Activated CD4-positive, alpha-beta T cell treated with anti-CD3 and anti-CD28 coated beads for 36 hours (primary cell): ENCODE measurements at regions of chr5 and their contacts with region 1.

Region 1: DNA sequence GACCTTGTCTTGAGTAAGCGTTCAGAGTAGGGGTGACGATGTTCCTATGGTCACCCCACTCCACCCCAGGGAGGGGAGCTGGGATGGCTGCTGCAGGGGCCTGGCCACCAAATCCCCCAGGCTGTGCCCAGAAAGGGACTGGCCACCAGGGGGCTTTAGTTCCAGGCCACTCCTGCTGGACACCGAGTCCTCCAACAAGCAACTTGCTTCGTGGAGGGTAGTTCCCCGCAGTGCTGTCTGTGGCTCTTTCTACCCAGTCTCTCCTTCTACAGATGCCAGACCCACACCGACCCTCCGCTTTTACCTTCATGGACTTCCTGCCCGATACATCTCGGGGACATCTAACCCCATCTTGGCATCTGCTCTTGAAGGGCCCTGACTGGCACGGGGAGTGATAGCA is 35.7 kb upstream of the GABRP start:
- DNase-seq: no peak
- ATAC-seq: no peak
- H3K4me3 Mint-ChIP-seq: no peak overlapping the region
- H3K27ac Mint-ChIP-seq: no peak overlapping the region
- H3K4me1 Mint-ChIP-seq: peaks cover 2% of the 10 kb centered on the region
- H3K27me3 Mint-ChIP-seq: peaks cover 38% of the 10 kb centered on the region

Region 2: GRCh38 chr5:170273945-170274710 is 473.7 kb before region 1 on chr5:
- CTCF ChIA-PET with region 1: no interaction called
- POLR2A ChIA-PET with region 1: no interaction called
- intact Hi-C with region 1: no loop called
- DNase-seq: peak; percentile 81
- ATAC-seq: peak; percentile 16
- H3K4me3 Mint-ChIP-seq: peak overlapping the region; percentile 45
- H3K27ac Mint-ChIP-seq: peak overlapping the region; percentile 92
- H3K4me1 Mint-ChIP-seq: peaks cover 92% of the 10 kb centered on the region
- H3K27me3 Mint-ChIP-seq: no peaks in the 10 kb centered on the region

Region 3: GRCh38 chr5:170614720-170615119 is 133.1 kb before region 1 on chr5:
- CTCF ChIA-PET with region 1: no interaction called
- POLR2A ChIA-PET with region 1: no interaction called
- intact Hi-C with region 1: no loop called
- DNase-seq: peak; percentile 44
- ATAC-seq: peak; percentile 58
- H3K4me3 Mint-ChIP-seq: no peak overlapping the region
- H3K27ac Mint-ChIP-seq: no peak overlapping the region
- H3K4me1 Mint-ChIP-seq: peaks cover 2% of the 10 kb centered on the region
- H3K27me3 Mint-ChIP-seq: peaks cover 2% of the 10 kb centered on the region

Region 4: DNA sequence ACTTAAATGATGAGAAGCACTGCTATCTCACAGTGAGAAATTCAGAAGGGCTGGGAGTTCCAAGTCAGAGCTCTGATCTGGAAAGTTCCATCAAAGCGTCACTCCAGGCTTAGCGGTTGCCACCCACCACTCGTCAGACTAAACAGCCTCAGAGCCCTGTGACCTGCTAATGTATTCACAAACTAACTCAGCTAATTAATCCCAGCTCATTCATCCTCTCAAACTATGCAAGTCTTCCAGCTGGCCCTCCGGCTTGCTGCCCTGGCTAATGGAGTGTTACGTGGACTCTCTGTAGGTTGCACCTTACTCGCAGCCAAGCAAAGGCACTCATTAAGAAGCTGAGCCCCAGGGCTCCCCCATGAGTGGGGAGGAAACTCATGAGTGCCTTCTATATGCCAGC is 46.5 kb before region 1 on chr5:
- CTCF ChIA-PET with region 1: no interaction called
- POLR2A ChIA-PET with region 1: no interaction called
- intact Hi-C with region 1: no loop called
- DNase-seq: no peak
- ATAC-seq: no peak
- H3K4me3 Mint-ChIP-seq: no peak overlapping the region
- H3K27ac Mint-ChIP-seq: no peak overlapping the region
- H3K4me1 Mint-ChIP-seq: no peaks in the 10 kb centered on the region
- H3K27me3 Mint-ChIP-seq: peaks cover 12% of the 10 kb centered on the region

Region 5: GRCh38 chr5:170896779-170897178 is 148.9 kb after region 1 on chr5:
- CTCF ChIA-PET with region 1: no interaction called
- POLR2A ChIA-PET with region 1: no interaction called
- intact Hi-C with region 1: loop called in 1 of 2 experiments (anchors 1 kb)
- DNase-seq: peak; percentile 7
- ATAC-seq: no peak
- H3K4me3 Mint-ChIP-seq: no peak overlapping the region
- H3K27ac Mint-ChIP-seq: no peak overlapping the region
- H3K4me1 Mint-ChIP-seq: no peaks in the 10 kb centered on the region
- H3K27me3 Mint-ChIP-seq: no peaks in the 10 kb centered on the region

Region 6: DNA sequence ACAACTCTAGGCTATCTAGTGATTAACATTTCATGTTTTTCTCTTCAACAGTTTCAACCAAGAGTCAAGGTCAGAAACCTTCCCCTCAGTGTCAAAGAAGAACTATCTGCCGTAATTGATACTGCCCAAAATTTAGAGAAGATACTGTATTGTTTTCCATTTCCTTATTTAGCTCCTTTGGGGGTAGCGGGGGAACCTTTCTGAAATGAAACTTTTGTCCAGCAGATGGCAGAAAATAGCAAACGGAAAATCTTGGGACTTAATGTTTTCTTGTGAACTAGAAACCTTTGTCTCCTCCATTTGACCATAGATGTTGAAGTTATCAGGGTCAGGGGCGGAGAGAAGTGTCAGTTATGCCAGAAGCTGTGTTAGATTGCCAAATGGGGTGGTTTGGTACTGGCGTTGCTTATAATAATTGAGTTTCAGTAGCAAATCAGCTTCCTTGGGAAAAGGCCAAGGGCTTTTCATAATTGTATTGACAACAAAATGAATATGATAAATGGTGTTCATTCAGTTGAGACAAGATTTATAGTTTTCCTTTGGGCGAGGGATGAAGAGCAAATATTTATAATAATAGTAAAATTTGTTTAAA is 459.5 kb after region 1 on chr5:
- CTCF ChIA-PET with region 1: interaction called, 3 read pairs
- POLR2A ChIA-PET with region 1: no interaction called
- intact Hi-C with region 1: loop called in 1 of 2 experiments (anchors 1 kb)
- DNase-seq: peak; percentile 16
- ATAC-seq: no peak
- H3K4me3 Mint-ChIP-seq: no peak overlapping the region
- H3K27ac Mint-ChIP-seq: no peak overlapping the region
- H3K4me1 Mint-ChIP-seq: no peaks in the 10 kb centered on the region
- H3K27me3 Mint-ChIP-seq: peaks cover 8% of the 10 kb centered on the region

Region 7: GRCh38 chr5:171342362-171343111 is 594.7 kb after region 1 on chr5:
- CTCF ChIA-PET with region 1: no interaction called
- POLR2A ChIA-PET with region 1: no interaction called
- intact Hi-C with region 1: loop called (anchors 1 to 5 kb)
- DNase-seq: peak; percentile 63
- ATAC-seq: peak; percentile 72
- H3K4me3 Mint-ChIP-seq: no peak overlapping the region
- H3K27ac Mint-ChIP-seq: no peak overlapping the region
- H3K4me1 Mint-ChIP-seq: no peaks in the 10 kb centered on the region
- H3K27me3 Mint-ChIP-seq: peaks cover 7% of the 10 kb centered on the region